ENCODE measurements at regions of chr4 and their contacts with region 1.

Region 1: GRCh38 chr4:15043226-15043625 is 40.9 kb downstream of the CPEB2 start:
- DNase-seq: no peak
- H3K4me3 Mint-ChIP-seq: no peak overlapping the region
- H3K27ac Mint-ChIP-seq: no peak overlapping the region
- H3K4me1 Mint-ChIP-seq: no peaks in the 10 kb centered on the region
- H3K27me3 Mint-ChIP-seq: no peaks in the 10 kb centered on the region

Region 2: DNA sequence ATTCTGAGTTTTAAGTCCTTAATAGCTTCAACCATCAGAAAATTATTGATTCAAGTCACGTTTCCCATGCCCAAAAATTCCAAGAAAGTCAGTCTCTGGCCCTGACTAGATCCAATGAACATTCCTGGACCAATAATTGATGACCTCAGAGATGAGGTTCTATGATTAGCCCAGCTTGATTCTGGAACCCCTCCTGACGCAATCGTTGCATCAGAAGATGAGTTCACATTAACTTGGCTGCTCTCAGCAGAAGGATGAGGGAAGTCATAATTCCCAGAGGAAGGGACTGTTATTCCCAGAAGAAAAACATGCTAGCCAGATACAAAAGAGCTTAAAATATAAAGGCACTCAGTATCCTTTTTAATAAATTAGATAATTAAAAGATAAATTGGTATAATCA is 75.2 kb before region 1 on chr4:
- CTCF ChIA-PET with region 1: no interaction called
- intact Hi-C with region 1: loop called (anchors 10 kb)
- DNase-seq: no peak
- H3K4me3 Mint-ChIP-seq: no peak overlapping the region
- H3K27ac Mint-ChIP-seq: no peak overlapping the region
- H3K4me1 Mint-ChIP-seq: no peaks in the 10 kb centered on the region
- H3K27me3 Mint-ChIP-seq: peaks cover 26% of the 10 kb centered on the region

Region 3: DNA sequence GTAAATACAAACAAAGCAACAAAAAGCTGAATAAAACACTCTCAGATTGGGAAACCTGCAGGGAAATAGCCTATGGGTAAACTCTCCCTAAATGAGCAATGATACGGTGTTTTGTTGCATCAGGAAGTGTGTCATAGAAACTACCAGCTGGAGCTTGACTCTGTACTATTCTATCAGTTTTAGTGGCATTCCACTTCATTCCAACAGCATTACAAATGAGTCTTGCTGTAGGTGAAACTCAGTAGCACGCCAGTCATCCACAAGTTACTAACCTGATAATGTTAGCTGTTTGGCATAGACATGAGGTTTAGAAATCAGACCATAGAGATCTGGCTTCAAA is 870.4 kb after region 1 on chr4:
- CTCF ChIA-PET with region 1: no interaction called
- intact Hi-C with region 1: no loop called
- DNase-seq: no peak
- H3K4me3 Mint-ChIP-seq: no peak overlapping the region
- H3K27ac Mint-ChIP-seq: no peak overlapping the region
- H3K4me1 Mint-ChIP-seq: no peaks in the 10 kb centered on the region
- H3K27me3 Mint-ChIP-seq: peaks cover 10% of the 10 kb centered on the region

Measured in activated naive CD4-positive, alpha-beta T cell treated with anti-CD3 and anti-CD28 coated beads for 36 hours (primary cell).